ENCODE measurements at regions of chr2 and their contacts with region 1.

Region 1: GRCh38 chr2:191218292-191218898 is 26.8 kb upstream of the MYO1B start:
- DNase-seq: no peak
- ATAC-seq: peak; percentile 75
- H3K4me3 Mint-ChIP-seq: no peak overlapping the region
- H3K27ac Mint-ChIP-seq: no peak overlapping the region
- H3K4me1 Mint-ChIP-seq: peaks cover 10% of the 10 kb centered on the region
- H3K27me3 Mint-ChIP-seq: peaks cover 2% of the 10 kb centered on the region
- CTCF ChIP-seq: no peak

Region 2: DNA sequence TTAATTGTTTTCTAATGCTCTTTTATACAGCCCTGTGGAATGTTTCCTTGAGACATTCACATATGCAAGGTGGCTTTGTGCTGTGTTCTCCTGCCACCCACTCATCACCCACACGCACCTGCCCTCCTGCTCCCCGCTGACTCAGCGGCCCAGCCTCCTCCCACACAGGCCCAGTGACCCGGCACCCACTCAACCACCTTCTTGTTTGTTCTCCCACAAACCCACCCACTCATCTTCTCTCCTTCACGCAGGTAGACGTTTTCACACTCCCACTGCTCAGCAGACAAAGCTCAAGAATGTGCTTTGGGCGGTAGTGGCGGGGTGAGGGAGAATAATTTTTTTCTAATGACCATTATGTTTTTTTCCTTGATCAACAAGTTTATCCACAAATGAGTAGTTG is 655.3 kb before region 1 on chr2:
- CTCF ChIA-PET with region 1: no interaction called
- POLR2A ChIA-PET with region 1: no interaction called
- intact Hi-C with region 1: no loop called
- DNase-seq: no peak
- ATAC-seq: peak; percentile 45
- H3K4me3 Mint-ChIP-seq: no peak overlapping the region
- H3K27ac Mint-ChIP-seq: no peak overlapping the region
- H3K4me1 Mint-ChIP-seq: peaks cover 10% of the 10 kb centered on the region
- H3K27me3 Mint-ChIP-seq: no peaks in the 10 kb centered on the region
- CTCF ChIP-seq: no peak

Region 3: GRCh38 chr2:191165176-191165643 is 53.2 kb before region 1 on chr2:
- CTCF ChIA-PET with region 1: interaction called, 36 read pairs
- POLR2A ChIA-PET with region 1: no interaction called
- intact Hi-C with region 1: loop called (anchors 1 kb)
- DNase-seq: no peak
- ATAC-seq: no peak
- H3K4me3 Mint-ChIP-seq: no peak overlapping the region
- H3K27ac Mint-ChIP-seq: no peak overlapping the region
- H3K4me1 Mint-ChIP-seq: peaks cover 2% of the 10 kb centered on the region
- H3K27me3 Mint-ChIP-seq: peaks cover 10% of the 10 kb centered on the region
- CTCF ChIP-seq: no peak

Region 4: DNA sequence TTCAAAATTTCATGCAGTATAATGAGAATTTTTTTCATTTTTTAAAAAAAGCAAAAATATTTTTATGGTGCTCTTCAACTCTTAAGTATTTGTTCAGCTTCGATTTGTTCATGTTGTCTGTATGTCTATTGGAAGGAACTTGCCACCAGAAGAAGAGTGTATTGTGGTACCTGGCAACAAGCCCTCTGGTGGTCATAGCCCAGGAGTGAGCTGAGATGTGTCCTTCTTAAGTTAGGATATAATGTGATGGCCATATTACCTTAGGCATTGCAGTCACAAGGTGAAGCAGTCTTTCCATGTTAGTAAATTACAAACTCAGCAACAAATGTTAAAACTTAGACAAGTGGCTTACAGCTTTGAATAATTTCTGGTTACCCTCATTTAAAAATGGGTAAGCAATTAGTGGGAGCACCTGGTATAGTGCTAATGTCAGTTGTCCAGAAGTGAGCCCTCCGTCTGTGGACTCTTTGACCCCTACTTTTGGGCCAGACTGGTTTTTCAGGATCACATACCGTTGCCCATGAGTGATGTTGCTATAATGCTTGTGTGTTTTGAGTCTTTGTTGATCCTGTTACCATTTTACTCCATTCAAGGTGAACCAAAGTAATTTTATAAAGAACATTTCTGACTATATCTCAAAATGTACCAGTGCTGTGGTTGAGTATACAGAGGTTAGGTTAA is 84.2 kb after region 1 on chr2:
- CTCF ChIA-PET with region 1: interaction called, 17 read pairs
- POLR2A ChIA-PET with region 1: no interaction called
- intact Hi-C with region 1: loop called (anchors 1 kb)
- DNase-seq: no peak
- ATAC-seq: peak; percentile 37
- H3K4me3 Mint-ChIP-seq: no peak overlapping the region
- H3K27ac Mint-ChIP-seq: no peak overlapping the region
- H3K4me1 Mint-ChIP-seq: peaks cover 2% of the 10 kb centered on the region
- H3K27me3 Mint-ChIP-seq: no peaks in the 10 kb centered on the region
- CTCF ChIP-seq: no peak

Region 5: DNA sequence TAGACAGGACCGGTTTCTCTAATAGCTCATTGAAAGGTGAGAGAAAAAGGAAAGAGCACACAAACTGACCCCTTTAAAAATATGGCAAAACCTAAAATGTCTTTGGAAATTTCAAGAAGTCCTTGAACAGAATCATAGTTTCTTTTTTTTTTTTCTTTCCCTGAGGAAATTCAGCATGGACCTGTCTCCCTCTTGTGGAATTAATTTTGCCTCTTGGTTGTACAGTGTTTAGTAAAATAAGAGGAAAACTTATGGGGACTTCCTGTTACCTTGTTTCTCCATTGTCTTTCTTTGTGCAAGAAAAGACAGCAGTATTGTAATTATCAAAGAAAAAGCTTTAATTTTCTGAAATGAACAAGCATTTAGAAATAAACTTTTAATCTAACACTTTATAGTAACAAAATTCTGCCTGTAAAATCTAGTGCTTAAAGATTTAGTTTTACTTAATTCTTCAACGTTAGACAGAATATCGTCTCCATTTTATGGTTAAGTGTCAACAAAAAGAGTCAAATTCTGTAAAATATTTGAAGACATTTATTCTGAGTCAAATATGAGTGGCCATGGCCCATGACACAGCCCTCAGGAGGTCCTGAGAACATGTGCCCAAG is 283.3 kb after region 1 on chr2:
- CTCF ChIA-PET with region 1: interaction called, 12 read pairs
- POLR2A ChIA-PET with region 1: no interaction called
- intact Hi-C with region 1: loop called (anchors 1 kb)
- DNase-seq: no peak
- ATAC-seq: no peak
- H3K4me3 Mint-ChIP-seq: no peak overlapping the region
- H3K27ac Mint-ChIP-seq: no peak overlapping the region
- H3K4me1 Mint-ChIP-seq: no peaks in the 10 kb centered on the region
- H3K27me3 Mint-ChIP-seq: peaks cover 8% of the 10 kb centered on the region
- CTCF ChIP-seq: no peak

Region 6: DNA sequence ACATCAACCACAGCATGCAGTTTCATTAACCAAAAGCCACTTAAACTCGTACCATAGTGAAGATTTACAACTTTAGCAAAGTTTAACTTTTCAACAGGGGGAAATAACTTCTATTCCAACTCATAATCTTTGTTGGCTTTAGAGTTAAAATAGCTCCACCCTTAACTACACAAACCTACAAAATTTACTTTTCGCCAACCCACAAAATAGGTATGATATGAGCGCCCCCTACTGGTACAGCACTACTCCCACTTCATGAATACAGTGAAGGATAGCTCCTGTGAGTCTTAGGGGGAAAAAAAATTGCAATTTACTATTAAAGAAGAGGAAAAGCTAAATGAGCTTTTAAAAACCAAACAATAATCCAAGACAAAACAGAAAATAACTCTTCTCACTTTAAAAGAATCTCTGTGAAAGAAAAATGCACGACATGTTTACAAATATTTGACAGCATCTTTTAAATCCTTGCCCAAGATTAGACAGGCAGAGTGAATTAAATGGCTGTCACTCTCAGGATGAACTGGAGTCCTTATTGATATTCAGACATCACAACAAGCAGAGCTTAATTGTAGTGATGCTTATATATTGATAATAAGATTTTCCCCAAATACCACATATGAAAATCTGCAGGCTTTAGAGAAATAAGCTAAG is 944.1 kb after region 1 on chr2:
- CTCF ChIA-PET with region 1: interaction called, 3 read pairs
- POLR2A ChIA-PET with region 1: no interaction called
- intact Hi-C with region 1: loop called (anchors 2 kb)
- DNase-seq: no peak
- ATAC-seq: peak; percentile 50
- H3K4me3 Mint-ChIP-seq: peak overlapping the region; percentile 17
- H3K27ac Mint-ChIP-seq: no peak overlapping the region
- H3K4me1 Mint-ChIP-seq: peaks cover 12% of the 10 kb centered on the region
- H3K27me3 Mint-ChIP-seq: peaks cover 4% of the 10 kb centered on the region
- CTCF ChIP-seq: peak; percentile 53

Measured in activated B cell treated with CpG ODN at 0.5 μM for 24 hours (primary cell).